HEK293T (cell line): ENCODE measurements at regions of chr5 and their contacts with region 1.

Region 1: DNA sequence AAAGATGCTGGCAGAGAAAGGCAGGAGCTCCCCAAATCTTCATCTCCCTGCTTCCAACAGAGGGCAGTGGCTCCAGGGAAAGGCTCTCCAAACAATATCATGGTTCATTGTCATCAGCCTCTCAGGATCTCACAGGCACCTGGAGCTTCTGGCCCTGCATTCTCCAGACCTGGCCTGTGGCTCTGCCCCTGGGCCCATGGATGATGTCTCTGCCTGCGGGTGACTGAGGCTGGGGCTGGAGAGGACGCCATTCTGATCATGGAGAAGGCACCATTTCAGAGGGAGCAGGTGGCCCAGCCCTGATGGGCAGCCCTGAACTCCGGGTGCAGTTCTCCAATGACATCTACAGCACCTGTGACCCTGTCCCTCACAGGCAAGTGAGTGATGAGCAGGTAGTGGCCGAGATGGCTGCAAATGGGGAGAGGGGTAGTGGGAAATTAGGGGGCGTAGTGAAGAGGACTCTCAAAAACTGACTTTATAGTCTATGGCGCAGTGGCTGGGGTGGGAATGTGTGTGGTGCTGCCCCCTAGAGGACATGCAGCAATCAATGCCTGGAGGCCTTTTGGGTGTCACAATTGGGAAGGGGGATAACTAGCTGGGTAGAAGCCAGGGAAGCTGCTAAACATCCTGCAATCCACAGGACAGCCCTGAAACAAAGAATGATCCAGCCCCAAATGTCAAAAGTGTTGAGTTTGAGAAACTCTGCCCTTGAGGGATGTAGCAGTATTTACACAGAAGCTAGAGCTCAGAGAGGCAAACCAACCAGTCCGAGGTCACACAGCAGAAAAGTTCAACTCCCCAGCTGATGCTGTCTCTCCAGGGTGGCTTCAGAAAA is 3.2 kb downstream of the SH3PXD2B start:
- DNase-seq: peak; percentile 72

Region 2: GRCh38 chr5:171175746-171176145 is 1275.3 kb before region 1 on chr5:
- CTCF ChIA-PET with region 1: interaction called, 13 read pairs
- POLR2A ChIA-PET with region 1: no interaction called
- DNase-seq: no peak

Region 3: DNA sequence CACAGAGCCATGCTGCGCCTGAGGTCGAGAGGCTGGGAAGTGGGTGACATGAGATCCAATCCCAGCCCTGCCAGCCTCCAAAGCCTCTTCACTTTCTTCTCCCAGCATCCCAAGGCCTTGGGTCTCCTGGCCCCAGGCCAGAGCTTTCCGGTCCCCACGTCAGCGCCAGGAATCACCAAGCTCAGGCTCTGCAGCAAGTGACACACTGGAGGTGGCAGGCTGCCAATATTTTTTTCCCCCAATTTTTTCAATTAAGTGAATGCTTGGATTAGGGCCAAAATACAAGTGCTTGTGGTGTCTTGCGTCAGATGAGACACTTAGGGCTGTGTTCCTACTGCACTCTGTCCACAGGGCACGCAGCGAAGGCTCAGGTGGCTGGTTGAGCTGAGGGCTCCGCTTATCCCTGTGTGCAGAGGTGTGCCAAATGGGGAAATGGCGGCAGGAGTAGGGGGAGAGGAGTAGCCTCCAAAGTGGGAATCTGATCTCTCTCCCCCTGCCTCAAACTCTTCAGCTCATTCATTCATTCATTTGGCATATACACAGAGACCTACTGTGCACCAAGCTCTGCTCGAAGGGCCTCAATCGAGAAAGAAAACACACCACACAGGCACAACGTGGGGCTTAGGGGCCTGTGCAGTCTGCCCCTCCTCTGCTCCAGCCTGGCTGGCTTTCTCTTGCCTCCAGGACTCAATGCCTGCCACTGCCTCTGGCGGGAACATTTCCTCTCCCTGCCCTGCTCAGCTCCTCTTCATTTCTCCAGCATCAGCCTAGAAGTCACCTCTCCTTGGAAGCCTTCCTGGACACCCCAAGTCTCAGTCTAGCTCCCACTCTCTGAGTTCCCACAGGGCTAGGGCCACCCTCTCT is 13.4 kb before region 1 on chr5:
- CTCF ChIA-PET with region 1: interaction called, 31 read pairs
- POLR2A ChIA-PET with region 1: interaction called, 4 read pairs
- DNase-seq: peak; percentile 51

Region 4: GRCh38 chr5:172473427-172473826 is 22.3 kb after region 1 on chr5:
- CTCF ChIA-PET with region 1: no interaction called
- POLR2A ChIA-PET with region 1: no interaction called
- DNase-seq: no peak